ENCODE measurements at regions of chr3 and their contacts with region 1.

Region 1: GRCh38 chr3:101573449-101574387 is at the start of gene PCNP:
- DNase-seq: peak; percentile 92
- H3K4me3 ChIP-seq: peak within 1 kb of the TSS; percentile 74 to 95
- H3K27ac ChIP-seq: peak within 1 kb of the TSS; percentile 92 to 94
- H3K4me1 ChIP-seq: peaks cover 6 to 12% of the 10 kb centered on the region in 2 experiments; a peak in 3 of 4 replicates
- H3K27me3 ChIP-seq: no peaks in the 10 kb centered on the region
- CTCF ChIP-seq: peak; percentile 93
- EP300 ChIP-seq: no peak
- RAD21 ChIP-seq: peak; percentile 69
- polyA plus RNA-seq, gene PCNP: 45.3 and 45.8 TPM in 2 replicates

Region 2: DNA sequence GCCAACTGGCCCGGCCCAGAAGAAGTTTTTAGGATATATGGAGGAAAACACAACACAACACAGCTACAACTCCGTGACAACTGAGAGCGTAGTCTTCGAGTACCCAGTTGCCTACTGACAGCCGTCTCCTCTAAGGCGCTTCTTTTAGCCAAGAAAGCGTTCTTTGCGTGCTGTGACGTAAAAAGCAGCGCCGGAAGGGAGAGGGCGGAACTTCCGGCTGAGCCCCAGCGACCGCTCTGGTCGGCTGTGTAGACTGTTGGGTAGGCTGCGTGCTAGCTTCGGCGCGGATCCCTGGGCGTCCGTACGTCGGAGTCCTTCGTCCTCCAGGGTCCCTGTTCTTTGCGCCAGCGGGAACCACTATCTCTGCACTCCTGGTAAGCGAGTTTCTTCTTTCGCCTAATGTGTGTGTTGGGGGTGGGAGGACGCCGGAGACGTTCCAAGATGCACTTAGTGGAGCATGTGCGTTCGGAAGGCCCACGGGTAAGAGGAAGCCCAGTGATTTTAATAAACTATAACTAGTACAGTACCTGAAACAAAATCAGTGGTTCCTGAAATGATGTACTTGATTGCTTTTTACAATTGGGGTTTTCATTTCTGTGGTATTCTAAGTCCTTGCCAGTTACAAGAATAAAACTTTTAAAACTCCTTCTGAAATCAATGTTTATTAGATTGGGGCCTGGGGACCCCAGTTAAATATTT is 11.9 kb before region 1 on chr3 and contains the start of gene TRMT10C:
- CTCF ChIA-PET with region 1: interaction called, 8 read pairs
- POLR2A ChIA-PET with region 1: interaction called, 20 read pairs
- DNase-seq: peak; percentile 89
- H3K4me3 ChIP-seq: peak within 1 kb of the TSS; percentile 86 to 94
- H3K27ac ChIP-seq: peak within 1 kb of the TSS; percentile 82 to 83
- H3K4me1 ChIP-seq: peaks cover 6 to 7% of the 10 kb centered on the region in 2 experiments; a peak in 2 of 4 replicates
- H3K27me3 ChIP-seq: 0 out of 2 replicates have a peak, but pooled peaks cover 4% of the 10 kb centered on the region
- CTCF ChIP-seq: no peak
- EP300 ChIP-seq: no peak
- RAD21 ChIP-seq: no peak
- polyA plus RNA-seq, gene TRMT10C: 13.7 and 16.1 TPM in 2 replicates

Region 3: GRCh38 chr3:101588616-101589015 is 14.9 kb after region 1 on chr3:
- CTCF ChIA-PET with region 1: interaction called, 12 read pairs
- POLR2A ChIA-PET with region 1: interaction called, 3 read pairs
- DNase-seq: no peak
- H3K4me3 ChIP-seq: no peak overlapping the region
- H3K27ac ChIP-seq: no peak overlapping the region
- H3K4me1 ChIP-seq: no peaks in the 10 kb centered on the region
- H3K27me3 ChIP-seq: no peaks in the 10 kb centered on the region
- CTCF ChIP-seq: no peak
- EP300 ChIP-seq: no peak
- RAD21 ChIP-seq: no peak

Region 4: GRCh38 chr3:101676765-101677435 is 103.2 kb after region 1 on chr3 and contains the start of gene ZBTB11:
- CTCF ChIA-PET with region 1: interaction called, 10 read pairs
- POLR2A ChIA-PET with region 1: interaction called, 8 read pairs
- DNase-seq: peak; percentile 94
- H3K4me3 ChIP-seq: peak within 1 kb of the TSS; percentile 95 to 100
- H3K27ac ChIP-seq: peak within 1 kb of the TSS; percentile 88 to 91
- H3K4me1 ChIP-seq: peaks cover 10 to 15% of the 10 kb centered on the region in 2 experiments; a peak in 3 of 4 replicates
- H3K27me3 ChIP-seq: no peaks in the 10 kb centered on the region
- CTCF ChIP-seq: peak; percentile 66
- EP300 ChIP-seq: 0 out of 4 replicates have a peak, but pooled peaks of 1 of the 2 experiments have one; percentile 38
- RAD21 ChIP-seq: peak; percentile 56
- polyA plus RNA-seq, gene ZBTB11: 4.9 and 7.2 TPM in 2 replicates